Sigmoid colon (tissue), 7 donors: ENCODE measurements at regions of chr11 and their contacts with region 1.

Region 1: DNA sequence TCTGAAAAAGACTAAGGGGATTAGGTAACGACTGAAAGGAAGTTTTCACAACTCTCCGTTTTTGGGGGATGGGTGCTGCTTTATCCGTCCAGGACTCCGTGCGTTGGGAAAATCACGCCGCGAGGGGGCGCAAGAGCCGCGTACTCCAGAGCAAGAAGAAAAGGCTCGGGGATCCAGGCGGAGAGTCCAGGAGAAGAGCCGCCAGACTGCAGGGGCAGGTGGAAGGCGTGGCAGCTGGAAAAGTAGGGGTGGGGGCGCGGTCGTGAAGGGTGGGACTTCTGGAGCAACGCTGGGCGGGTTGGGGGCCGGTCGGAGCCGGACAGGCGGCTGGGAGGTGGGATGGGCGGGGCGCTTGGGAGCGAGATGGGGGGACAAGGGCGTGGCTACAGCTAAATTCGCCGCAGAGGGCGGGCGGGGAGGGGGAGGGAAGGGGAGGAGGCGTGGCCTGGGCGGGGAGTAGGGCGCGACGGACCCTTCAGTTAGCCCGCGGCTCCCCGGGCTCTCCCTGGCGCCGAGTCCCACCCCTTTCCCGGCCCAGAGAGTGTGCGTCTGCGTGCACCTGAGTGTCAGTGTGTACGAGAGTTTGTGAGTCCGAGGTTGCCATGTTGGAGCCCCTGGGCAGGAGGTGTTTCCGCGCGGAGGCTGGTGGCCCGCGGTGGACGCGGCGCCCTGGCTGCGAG is 613 bp upstream of the ARHGEF17 start:
- DNase-seq: peak; percentile 99
- H3K4me3 ChIP-seq: peak overlapping the region; percentile 59 to 85 (median 68)
- H3K27ac ChIP-seq: peak overlapping the region; percentile 94 to 100 (median 98)
- H3K4me1 ChIP-seq: peaks cover 0 to 46% (median 40%) of the 10 kb centered on the region in 4 donors
- H3K27me3 ChIP-seq: no peaks in the 10 kb centered on the region
- CTCF ChIP-seq: peak; percentile 85 to 94 (median 93)
- EP300 ChIP-seq: no peak
- POLR2A ChIP-seq: peak; percentile 35 to 56

Region 2: DNA sequence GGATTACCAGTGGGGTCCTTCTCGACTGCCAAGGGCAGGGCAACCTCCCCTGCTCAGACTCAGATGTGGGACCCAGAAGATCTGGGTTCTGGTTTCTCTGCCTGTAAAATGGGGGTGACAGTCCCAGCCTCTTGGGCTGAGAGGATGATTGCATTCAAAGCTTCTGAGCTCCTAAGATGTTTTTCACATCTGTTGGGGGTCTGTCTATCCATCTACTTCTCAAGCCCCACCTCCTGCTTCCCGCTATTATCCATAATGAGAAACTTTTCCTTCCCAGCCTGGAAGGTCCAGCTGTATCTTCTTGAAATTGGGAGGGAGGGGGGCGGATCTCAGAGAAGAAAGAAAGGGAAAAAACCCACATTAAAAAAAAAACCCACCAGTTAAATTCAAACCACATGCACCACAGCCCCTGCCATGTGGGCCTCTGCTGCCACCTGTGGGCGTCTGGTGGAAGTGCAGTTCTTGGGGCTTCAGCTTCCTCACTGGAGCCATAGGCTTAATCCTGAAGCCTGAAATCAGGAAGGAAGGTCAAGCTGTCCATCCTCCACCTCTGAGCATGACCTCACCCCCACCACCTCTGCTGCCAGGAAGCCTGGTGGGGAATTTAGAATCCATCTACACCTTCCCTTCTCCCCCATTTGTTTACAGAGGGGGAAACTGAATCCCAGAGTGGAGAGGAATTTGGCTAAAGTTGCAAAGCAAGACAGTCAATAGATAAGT is 27.9 kb after region 1 on chr11:
- intact Hi-C with region 1: loop called (anchors 1 kb)
- DNase-seq: peak; percentile 91
- H3K4me3 ChIP-seq: no peak overlapping the region
- H3K27ac ChIP-seq: peak overlapping the region; percentile 77 to 90 (median 81)
- H3K4me1 ChIP-seq: peaks cover 0 to 98% (median 82%) of the 10 kb centered on the region in 4 donors
- H3K27me3 ChIP-seq: no peaks in the 10 kb centered on the region
- CTCF ChIP-seq: peak; percentile 86 to 99 (median 90)
- EP300 ChIP-seq: no peak
- POLR2A ChIP-seq: no peak

Region 3: DNA sequence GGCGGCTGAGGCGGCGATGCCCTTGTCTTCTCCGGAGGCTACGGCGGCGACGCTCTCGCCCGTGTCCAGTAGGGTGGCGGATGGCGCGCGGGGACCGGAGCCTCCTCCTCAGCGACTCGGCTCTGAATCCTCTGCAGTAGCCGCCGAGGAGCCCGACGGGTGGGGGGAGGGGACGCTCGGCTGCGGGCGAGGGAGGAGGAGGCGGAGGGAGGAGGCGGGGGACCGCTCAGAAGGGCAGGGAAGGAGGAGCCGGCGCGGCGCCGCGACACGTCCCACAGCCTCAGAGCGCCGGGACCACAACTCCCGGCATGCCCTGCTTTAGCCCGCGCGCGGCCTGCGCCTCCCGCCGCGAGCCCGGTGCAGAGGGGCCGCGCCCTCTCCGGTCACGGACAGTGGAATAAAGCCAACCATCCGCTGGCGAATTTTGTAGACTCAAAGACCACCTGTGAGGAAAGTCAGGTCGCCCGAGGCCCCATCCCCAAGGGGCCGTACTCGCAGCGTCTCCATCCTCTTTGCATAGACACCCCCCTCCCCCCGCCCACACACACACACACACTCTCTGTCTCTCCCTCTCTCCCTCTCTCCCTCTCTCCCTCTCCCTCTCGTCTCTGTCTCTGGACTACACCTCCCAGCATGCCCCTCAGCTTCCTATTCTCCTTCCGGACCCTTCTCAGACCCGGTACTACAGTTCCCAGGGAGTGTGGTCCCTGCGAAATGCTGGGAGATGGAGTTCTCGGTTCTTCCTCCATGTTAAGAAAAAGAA is 290.7 kb after region 1 on chr11 and contains the start of gene FAM168A:
- intact Hi-C with region 1: loop called (anchors 2 kb)
- DNase-seq: peak; percentile 97
- H3K4me3 ChIP-seq: peak within 1 kb of the TSS; percentile 87 to 98 (median 92)
- H3K27ac ChIP-seq: peak within 1 kb of the TSS; percentile 78 to 88 (median 87)
- H3K4me1 ChIP-seq: peaks cover 0 to 23% (median 16%) of the 10 kb centered on the region in 4 donors
- H3K27me3 ChIP-seq: no peaks in the 10 kb centered on the region
- CTCF ChIP-seq: peak in 2 of 4 experiments; percentile 20 to 34
- EP300 ChIP-seq: peak in 1 of 4 donors; percentile 13
- POLR2A ChIP-seq: peak; percentile 55 to 58
- total RNA-seq, gene FAM168A: 20.7 to 37.7 (median 26.3) TPM